ENCODE measurements at regions of chr19 and their contacts with region 1.

Region 1: GRCh38 chr19:10269333-10270179 is 1.4 kb upstream of the ICAM1 start:
- DNase-seq: no peak
- ATAC-seq: peak; percentile 55
- H3K4me3 ChIP-seq: peak overlapping the region; percentile 92
- H3K27ac ChIP-seq: peak overlapping the region; percentile 98
- H3K4me1 ChIP-seq: no peaks in the 10 kb centered on the region; the same call in 1 of the 2 replicates
- H3K27me3 ChIP-seq: no peaks in the 10 kb centered on the region
- CTCF ChIP-seq: peak; percentile 94 to 99 (median 97); a peak in 5 of 6 replicates
- EP300 ChIP-seq: no peak
- POLR2A ChIP-seq: no peak
- RAD21 ChIP-seq: peak; percentile 95

Region 2: DNA sequence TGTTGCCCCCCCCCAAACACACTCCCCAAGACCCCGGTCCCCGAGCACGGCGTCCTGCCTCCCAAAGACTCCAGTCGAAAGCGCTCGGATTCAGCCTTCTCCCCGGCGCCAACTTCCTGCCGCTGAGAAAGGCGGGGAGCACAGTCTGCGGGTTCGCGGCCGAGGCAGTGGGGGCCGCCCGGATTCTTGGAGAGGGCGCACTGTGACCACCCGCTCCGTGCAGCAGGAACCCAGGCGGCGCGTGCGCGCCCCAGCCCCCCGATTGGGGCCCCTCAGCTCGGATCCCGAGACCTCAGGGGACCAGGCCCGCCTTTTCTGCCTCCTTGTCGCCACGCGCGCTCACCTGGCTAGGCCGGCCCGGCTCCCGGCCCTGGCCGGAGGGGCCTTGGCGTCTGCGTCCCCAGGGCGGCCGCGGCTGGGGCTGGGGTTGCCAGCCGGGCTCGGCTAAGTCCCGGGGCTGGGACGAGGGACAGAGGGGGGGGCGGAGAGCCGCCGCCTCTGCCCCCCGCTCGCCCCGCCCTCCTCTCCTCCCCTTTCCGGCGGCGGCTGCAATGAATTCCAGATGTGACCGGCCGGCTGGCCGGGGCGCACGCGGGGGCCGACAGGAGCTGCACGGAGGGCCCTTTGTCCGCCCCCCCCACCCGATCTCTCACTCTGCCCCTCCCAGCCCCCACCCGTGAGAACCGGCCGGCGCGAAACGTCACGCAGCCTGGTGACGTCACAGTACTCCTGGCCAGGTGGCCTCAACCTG is 38.5 kb before region 1 on chr19 and contains the start of gene S1PR2:
- CTCF ChIA-PET with region 1: interaction called, 5 read pairs
- POLR2A ChIA-PET with region 1: interaction called, 6 read pairs
- RAD21 ChIA-PET with region 1: interaction called, 10 read pairs
- SMC1A ChIA-PET with region 1: interaction called, 6 read pairs
- in situ Hi-C with region 1: no loop called
- intact Hi-C with region 1: no loop called
- DNase-seq: no peak
- ATAC-seq: peak; percentile 67
- H3K4me3 ChIP-seq: peak within 1 kb of the TSS; percentile 90
- H3K27ac ChIP-seq: peak within 1 kb of the TSS; percentile 97
- H3K4me1 ChIP-seq: peaks cover 44% of the 10 kb centered on the region
- H3K27me3 ChIP-seq: no peaks in the 10 kb centered on the region
- CTCF ChIP-seq: 0 out of 6 replicates have a peak, but pooled peaks of 1 of the 3 experiments have one; percentile 19
- EP300 ChIP-seq: no peak
- POLR2A ChIP-seq: peak; percentile 81
- RAD21 ChIP-seq: no peak
- polyA plus RNA-seq, gene S1PR2: 4.9 to 9.6 TPM

Region 3: DNA sequence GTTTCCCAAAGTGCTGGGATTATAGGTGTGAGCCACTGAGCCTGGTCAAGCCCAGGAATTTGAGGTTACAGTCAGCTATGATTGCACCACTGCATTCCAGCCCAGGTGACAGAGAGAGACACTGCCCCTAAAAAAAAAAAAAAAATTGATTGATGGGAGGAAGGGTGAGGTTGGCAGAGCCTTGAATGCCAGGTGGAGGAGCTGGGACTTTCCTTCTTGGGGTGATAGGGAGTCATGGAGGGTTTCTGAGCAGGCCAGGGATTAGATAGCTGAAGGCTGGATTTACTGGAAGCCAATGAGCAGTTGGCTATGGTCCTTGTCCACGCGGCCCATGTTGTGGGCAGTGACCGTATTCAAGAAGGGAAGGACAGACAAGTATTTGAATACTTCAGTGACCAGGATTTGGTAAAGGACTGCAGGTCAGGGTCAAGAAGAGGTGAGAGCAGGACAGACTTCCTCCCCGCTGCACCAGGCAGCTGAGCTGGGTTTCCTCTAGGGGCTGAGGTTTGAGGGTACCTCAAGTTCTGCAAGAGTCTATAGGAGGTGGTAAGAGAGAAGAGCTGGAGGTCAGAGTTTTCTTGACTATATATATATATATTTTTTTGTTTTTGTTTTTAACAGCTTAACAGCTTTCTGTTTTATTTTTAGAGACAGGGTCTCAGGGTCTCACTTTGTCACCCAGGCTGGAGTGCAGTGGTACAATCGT is 10.3 kb after region 1 on chr19:
- CTCF ChIA-PET with region 1: interaction called, 58 read pairs
- POLR2A ChIA-PET with region 1: interaction called, 6 read pairs
- RAD21 ChIA-PET with region 1: interaction called, 7 read pairs
- SMC1A ChIA-PET with region 1: interaction called, 4 read pairs
- in situ Hi-C with region 1: no loop called
- intact Hi-C with region 1: no loop called
- DNase-seq: no peak
- ATAC-seq: peak; percentile 30
- H3K4me3 ChIP-seq: peak overlapping the region; percentile 47; the same call in 1 of the 2 replicates
- H3K27ac ChIP-seq: no peak overlapping the region
- H3K4me1 ChIP-seq: peaks cover 11% of the 10 kb centered on the region
- H3K27me3 ChIP-seq: no peaks in the 10 kb centered on the region
- CTCF ChIP-seq: no peak
- EP300 ChIP-seq: no peak
- POLR2A ChIP-seq: peak; percentile 32; the same call in 1 of the 2 replicates
- RAD21 ChIP-seq: no peak

Region 4: GRCh38 chr19:10339380-10339960 is 69.9 kb after region 1 on chr19 and contains the start of gene ICAM3:
- CTCF ChIA-PET with region 1: interaction called, 5 read pairs
- POLR2A ChIA-PET with region 1: interaction called, 6 read pairs
- RAD21 ChIA-PET with region 1: interaction called, 15 read pairs
- SMC1A ChIA-PET with region 1: interaction called, 4 read pairs
- in situ Hi-C with region 1: no loop called
- intact Hi-C with region 1: loop called (anchors 5 kb)
- DNase-seq: peak; percentile 43
- ATAC-seq: peak; percentile 97
- H3K4me3 ChIP-seq: peak within 1 kb of the TSS; percentile 90
- H3K27ac ChIP-seq: peak within 1 kb of the TSS; percentile 85
- H3K4me1 ChIP-seq: peaks cover 12% of the 10 kb centered on the region
- H3K27me3 ChIP-seq: no peaks in the 10 kb centered on the region
- CTCF ChIP-seq: no peak
- EP300 ChIP-seq: no peak
- POLR2A ChIP-seq: peak; percentile 85
- RAD21 ChIP-seq: no peak
- polyA plus RNA-seq, gene ICAM3: 5.5 to 29.2 TPM

Region 5: GRCh38 chr19:10388957-10389356 is 119.4 kb after region 1 on chr19:
- CTCF ChIA-PET with region 1: interaction called, 370 read pairs
- POLR2A ChIA-PET with region 1: interaction called, 108 read pairs
- RAD21 ChIA-PET with region 1: interaction called, 206 read pairs
- SMC1A ChIA-PET with region 1: interaction called, 158 read pairs
- in situ Hi-C with region 1: loop called (anchors 5 kb)
- intact Hi-C with region 1: loop called (anchors 1 kb)
- DNase-seq: peak; percentile 69
- ATAC-seq: peak; percentile 53
- H3K4me3 ChIP-seq: no peak overlapping the region
- H3K27ac ChIP-seq: no peak overlapping the region
- H3K4me1 ChIP-seq: peaks cover 10% of the 10 kb centered on the region
- H3K27me3 ChIP-seq: no peaks in the 10 kb centered on the region
- CTCF ChIP-seq: peak; percentile 88 to 95 (median 92)
- EP300 ChIP-seq: no peak
- POLR2A ChIP-seq: peak; percentile 46; the same call in 1 of the 2 replicates
- RAD21 ChIP-seq: peak; percentile 84

Region 6: GRCh38 chr19:10431943-10432735 is 162.6 kb after region 1 on chr19:
- CTCF ChIA-PET with region 1: interaction called, 4 read pairs
- POLR2A ChIA-PET with region 1: interaction called, 5 read pairs
- RAD21 ChIA-PET with region 1: interaction called, 11 read pairs
- SMC1A ChIA-PET with region 1: interaction called, 4 read pairs
- in situ Hi-C with region 1: no loop called
- intact Hi-C with region 1: no loop called
- DNase-seq: no peak
- ATAC-seq: peak; percentile 66
- H3K4me3 ChIP-seq: peak overlapping the region; percentile 54; the same call in 1 of the 2 replicates
- H3K27ac ChIP-seq: peak overlapping the region; percentile 56; the same call in 1 of the 2 replicates
- H3K4me1 ChIP-seq: peaks cover 41% of the 10 kb centered on the region
- H3K27me3 ChIP-seq: peaks cover 0 to 4% of the 10 kb centered on the region in 2 experiments; a peak in 1 of 4 replicates
- CTCF ChIP-seq: no peak
- EP300 ChIP-seq: no peak
- POLR2A ChIP-seq: no peak
- RAD21 ChIP-seq: no peak

Region 7: DNA sequence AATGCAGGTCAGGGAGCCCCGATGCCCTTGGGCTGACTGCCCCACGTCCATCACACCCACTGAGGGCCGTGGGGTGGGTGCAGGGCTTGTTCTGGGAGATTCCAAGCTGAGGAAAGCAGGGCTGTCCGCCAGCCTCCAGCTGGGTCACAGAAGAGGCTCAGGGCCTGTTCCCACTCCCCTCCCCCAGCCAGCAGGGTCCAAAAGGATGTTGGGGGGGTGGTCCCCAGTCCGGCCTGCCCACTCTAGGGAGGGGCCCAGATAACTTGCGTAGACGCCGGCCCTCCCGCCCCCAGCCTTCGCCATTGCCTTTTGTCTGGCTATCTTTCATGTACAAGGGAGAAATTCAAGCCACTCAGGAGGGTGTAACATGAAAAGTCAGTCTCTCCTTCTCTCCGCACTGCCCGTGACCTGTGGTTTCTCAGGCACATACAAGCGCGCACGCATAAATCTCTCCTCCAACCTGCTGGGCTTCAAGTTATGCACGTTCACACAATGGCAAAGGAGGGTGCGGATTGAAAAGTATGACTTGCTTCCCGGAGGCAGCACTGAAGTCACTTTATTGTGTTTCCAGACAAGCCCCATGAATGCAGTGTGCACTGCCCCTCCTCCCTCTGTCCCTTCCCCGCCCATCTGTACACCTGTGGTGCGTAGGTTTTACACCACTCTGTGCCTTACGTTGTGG is 622.0 kb after region 1 on chr19:
- CTCF ChIA-PET with region 1: no interaction called
- POLR2A ChIA-PET with region 1: no interaction called
- RAD21 ChIA-PET with region 1: no interaction called
- SMC1A ChIA-PET with region 1: no interaction called
- in situ Hi-C with region 1: no loop called
- intact Hi-C with region 1: no loop called
- DNase-seq: no peak
- ATAC-seq: no peak
- H3K4me3 ChIP-seq: no peak overlapping the region
- H3K27ac ChIP-seq: no peak overlapping the region
- H3K4me1 ChIP-seq: peaks cover 22% of the 10 kb centered on the region
- H3K27me3 ChIP-seq: no peaks in the 10 kb centered on the region
- CTCF ChIP-seq: no peak
- EP300 ChIP-seq: no peak
- POLR2A ChIP-seq: no peak
- RAD21 ChIP-seq: no peak